ENCODE measurements at regions of chr3 and their contacts with region 1.

Region 1: DNA sequence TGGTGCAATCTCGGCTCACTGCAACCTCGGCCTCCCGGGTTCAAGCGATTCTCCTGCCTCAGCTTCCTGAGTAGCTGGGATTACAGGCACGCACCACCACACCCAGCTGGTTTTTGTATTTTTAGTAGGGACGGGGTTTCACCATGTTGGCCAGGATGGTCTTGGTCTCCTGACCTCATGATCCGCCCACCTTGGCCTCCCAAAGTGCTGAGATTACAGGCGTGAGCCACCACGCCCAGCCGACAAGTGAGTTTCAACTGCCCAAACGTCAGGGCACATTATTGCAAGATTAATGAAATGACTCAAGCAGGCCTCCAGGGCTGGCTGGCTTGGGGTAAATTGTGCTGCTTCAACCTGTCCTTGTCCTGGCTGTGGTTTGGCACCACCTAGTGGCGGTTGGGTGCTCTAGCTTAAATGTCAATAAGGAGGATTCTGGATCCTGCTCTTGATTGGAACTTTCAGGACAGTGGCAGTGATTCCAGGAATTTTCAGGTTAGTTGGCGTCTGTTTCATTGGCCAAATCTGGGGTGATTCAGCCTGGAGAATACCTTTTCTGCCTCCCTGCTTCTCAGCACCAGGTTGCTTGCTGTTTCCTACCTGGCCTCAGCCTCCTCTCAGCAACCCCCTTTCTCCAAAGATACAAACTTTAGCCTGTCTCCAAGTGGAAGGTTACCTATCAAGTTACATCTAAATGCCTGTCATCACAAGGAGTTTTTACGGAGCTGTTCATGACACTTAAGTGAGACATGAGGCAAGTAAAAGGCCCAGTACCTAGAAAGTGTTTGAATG is 32.4 kb upstream of the SACM1L start:
- DNase-seq: peak; percentile 94 to 98
- H3K4me3 ChIP-seq: no peak overlapping the region
- CTCF ChIP-seq: peak in 2 of 3 donors; percentile 67 to 79
- POLR2A ChIP-seq: no peak

Region 2: GRCh38 chr3:45043728-45044299 is 613.0 kb before region 1 on chr3:
- intact Hi-C with region 1: loop called (anchors 10 kb)
- DNase-seq: no peak
- H3K4me3 ChIP-seq: no peak overlapping the region
- CTCF ChIP-seq: no peak
- POLR2A ChIP-seq: no peak

Region 3: DNA sequence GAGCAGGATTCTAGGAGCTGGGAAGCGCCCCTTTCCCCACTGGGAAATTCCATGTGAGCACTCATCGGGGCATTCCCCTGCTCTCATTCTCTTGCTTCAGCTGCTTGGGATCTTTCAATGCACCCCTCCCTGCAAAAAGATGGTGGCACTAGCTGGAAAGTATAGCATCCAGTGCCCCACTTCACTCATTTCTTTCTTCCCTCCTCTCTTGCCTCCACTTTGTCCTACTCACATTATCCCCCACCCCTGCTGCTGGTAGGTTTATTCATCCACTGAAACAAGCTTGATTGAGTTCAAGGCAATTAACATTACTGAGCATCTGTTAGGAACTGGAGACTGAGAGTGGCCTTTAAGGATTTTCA is 147.0 kb before region 1 on chr3:
- intact Hi-C with region 1: loop called (anchors 2 kb)
- DNase-seq: no peak
- H3K4me3 ChIP-seq: no peak overlapping the region
- CTCF ChIP-seq: no peak
- POLR2A ChIP-seq: no peak

Region 4: DNA sequence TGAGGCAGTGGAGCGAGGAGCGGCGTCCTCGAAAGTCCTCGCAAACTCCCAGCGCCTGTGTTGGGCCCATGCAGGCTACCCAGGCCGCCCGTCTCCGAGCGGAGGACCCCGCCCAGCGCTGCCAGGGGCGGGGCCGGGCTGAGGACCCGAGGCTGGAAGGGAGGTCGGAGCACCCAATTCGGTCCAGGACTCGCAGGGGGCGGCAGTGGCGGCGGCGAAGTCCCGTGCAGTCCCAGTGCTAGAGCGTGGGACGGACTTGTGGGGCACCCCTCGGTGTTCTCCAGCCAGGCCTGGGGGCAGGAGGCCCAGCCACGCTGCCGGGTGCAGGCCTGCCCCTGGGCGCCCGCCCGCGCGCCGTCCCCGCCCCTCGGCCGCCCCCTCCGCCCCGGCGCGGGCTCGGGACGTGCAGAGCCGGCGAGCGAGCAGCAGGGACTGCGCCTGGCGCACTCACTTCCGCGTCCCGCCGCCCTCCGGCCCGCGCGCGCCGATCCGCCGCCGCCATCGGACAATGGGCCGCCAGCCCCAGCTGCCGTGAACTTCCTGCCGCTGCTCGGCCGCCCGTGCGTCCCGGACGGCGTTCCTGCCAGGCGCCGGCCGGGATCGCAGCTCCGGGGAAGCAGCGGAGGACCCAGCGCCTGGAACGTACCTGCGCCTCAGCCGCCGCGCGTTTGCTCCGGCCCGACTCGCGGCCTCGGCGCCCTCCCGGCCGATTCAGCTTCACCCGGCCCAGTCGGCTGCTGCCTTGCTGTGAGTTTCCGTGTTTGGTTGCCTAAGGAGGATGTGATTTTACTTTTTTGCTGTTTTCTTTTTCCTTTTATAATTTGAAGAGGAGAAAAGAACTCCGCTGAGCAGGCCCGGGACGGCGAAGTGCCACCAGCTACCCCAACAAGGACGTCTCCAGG is 62.8 kb before region 1 on chr3:
- intact Hi-C with region 1: loop called (anchors 10 kb)
- DNase-seq: peak in 1 of 2 donors; percentile 93
- H3K4me3 ChIP-seq: peak overlapping the region; percentile 61
- CTCF ChIP-seq: no peak
- POLR2A ChIP-seq: no peak

Region 5: DNA sequence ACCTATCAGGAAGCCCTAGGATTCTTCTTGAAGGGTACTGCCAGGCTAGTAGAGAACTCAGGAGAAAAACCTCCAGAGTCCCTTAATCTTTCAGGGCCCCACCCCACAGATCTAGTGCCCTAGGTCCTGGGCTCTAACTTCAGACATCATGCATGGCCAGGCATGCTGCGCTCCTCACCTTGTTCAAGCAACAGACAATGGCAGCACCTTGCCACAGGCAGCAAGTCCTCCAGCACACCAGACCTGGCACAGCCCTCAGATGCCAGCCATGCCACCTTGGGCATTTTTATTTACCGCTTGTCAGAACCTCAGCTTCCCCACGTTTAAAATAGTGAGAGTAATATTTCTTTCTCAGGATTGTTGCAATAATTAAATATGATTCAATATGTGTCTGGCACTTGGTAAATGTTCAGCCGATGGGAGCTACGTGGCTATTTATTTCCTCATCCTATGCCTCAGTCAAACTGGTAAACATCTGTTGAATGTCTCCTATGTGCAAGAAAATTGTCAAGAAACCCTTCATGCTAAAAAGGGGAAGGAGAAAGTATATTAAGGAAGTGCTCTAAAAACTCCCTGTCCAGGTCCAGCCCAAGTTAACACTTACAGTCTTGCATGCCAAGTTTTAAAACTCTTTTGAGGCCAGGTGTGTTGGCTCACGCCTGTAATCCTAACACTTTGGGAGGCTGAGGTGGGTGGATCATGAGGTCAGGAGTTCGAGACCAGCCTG is 565.8 kb after region 1 on chr3:
- intact Hi-C with region 1: no loop called
- DNase-seq: no peak
- H3K4me3 ChIP-seq: no peak overlapping the region
- CTCF ChIP-seq: no peak
- POLR2A ChIP-seq: no peak

Region 6: GRCh38 chr3:47065681-47066080 is 1408.9 kb after region 1 on chr3:
- intact Hi-C with region 1: no loop called
- DNase-seq: no peak
- H3K4me3 ChIP-seq: no peak overlapping the region
- CTCF ChIP-seq: no peak
- POLR2A ChIP-seq: no peak

Measured in lower leg skin (tissue), 4 donors.